Activated B cell treated with CpG ODN at 0.5 μM for 24 hours (primary cell): ENCODE measurements at regions of chr14 and their contacts with region 1.

Region 1: DNA sequence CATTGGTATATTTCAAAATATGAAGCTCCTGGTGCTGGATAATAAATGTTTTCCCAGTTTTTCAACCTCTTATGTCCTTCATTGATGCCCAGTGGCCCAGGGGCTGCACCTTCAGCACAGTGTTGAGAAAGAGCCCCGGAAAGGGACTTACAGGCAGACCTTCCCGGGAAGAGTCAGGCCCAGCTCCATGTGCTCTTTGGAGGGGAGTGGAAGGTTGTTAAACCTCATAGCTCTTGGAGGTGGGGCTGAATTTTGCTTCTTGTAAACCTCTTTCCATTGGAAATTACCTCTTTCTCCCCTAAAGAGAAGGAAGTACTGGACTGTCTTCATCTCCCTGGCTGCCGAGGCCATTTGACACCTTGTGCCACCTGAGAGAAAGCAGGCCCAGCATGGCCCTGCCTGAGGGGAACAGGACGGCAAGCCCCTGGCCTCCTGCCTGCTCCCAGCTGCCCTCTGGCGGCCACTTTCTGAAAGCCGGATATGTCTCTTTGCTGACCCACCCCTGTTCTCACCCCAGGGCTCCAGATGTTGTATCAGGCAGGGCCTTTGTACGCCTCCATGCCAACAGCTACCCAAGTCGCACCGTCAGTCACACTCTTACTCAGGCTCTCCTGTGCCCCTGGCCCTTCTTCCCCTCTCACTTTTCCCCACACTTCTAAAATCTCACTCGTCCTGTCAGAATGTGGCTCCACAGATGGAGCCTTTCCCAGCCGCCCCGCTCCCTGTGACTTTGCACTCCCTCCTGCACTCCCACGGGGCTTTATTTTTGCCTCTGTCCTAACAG is 43.0 kb downstream of the EVL start:
- DNase-seq: peak; percentile 80
- ATAC-seq: peak; percentile 98
- H3K4me3 Mint-ChIP-seq: no peak overlapping the region
- H3K27ac Mint-ChIP-seq: peak overlapping the region; percentile 86
- H3K4me1 Mint-ChIP-seq: peaks cover 49% of the 10 kb centered on the region
- H3K27me3 Mint-ChIP-seq: no peaks in the 10 kb centered on the region
- CTCF ChIP-seq: peak; percentile 17

Region 2: GRCh38 chr14:99982537-99983250 is 125.5 kb before region 1 on chr14:
- CTCF ChIA-PET with region 1: interaction called, 49 read pairs
- POLR2A ChIA-PET with region 1: no interaction called
- intact Hi-C with region 1: loop called (anchors 1 kb)
- DNase-seq: no peak
- ATAC-seq: peak; percentile 98
- H3K4me3 Mint-ChIP-seq: no peak overlapping the region
- H3K27ac Mint-ChIP-seq: no peak overlapping the region
- H3K4me1 Mint-ChIP-seq: no peaks in the 10 kb centered on the region
- H3K27me3 Mint-ChIP-seq: no peaks in the 10 kb centered on the region
- CTCF ChIP-seq: peak; percentile 88

Region 3: GRCh38 chr14:100035700-100036099 is 72.5 kb before region 1 on chr14:
- CTCF ChIA-PET with region 1: interaction called, 10 read pairs
- POLR2A ChIA-PET with region 1: no interaction called
- intact Hi-C with region 1: no loop called
- DNase-seq: no peak
- ATAC-seq: no peak
- H3K4me3 Mint-ChIP-seq: no peak overlapping the region
- H3K27ac Mint-ChIP-seq: no peak overlapping the region
- H3K4me1 Mint-ChIP-seq: no peaks in the 10 kb centered on the region
- H3K27me3 Mint-ChIP-seq: no peaks in the 10 kb centered on the region
- CTCF ChIP-seq: no peak

Region 4: GRCh38 chr14:100067971-100068959 is 40.0 kb before region 1 on chr14:
- CTCF ChIA-PET with region 1: interaction called, 111 read pairs
- POLR2A ChIA-PET with region 1: interaction called, 13 read pairs
- intact Hi-C with region 1: loop called (anchors 1 kb)
- DNase-seq: peak; percentile 60
- ATAC-seq: peak; percentile 47
- H3K4me3 Mint-ChIP-seq: peak overlapping the region; percentile 94
- H3K27ac Mint-ChIP-seq: peak overlapping the region; percentile 98
- H3K4me1 Mint-ChIP-seq: peaks cover 95% of the 10 kb centered on the region
- H3K27me3 Mint-ChIP-seq: no peaks in the 10 kb centered on the region
- CTCF ChIP-seq: no peak

Region 5: DNA sequence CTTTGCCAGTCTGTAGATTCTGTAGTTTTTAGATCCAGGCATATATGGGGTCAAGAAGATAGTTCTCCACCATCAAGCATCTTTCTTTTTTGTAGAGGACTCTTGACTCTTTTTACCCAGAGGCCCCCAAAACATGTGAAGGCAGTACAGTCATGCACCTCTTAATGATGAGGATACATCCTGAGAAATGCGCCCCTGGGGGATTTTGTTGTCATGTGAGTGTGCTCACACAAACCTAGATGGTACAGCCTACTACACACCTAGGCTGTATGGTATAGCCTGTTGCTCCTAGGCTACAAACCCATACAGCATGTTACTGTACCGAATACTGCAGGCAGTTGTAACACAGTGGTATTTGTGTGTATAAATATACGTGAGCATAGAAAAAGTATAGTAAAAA is 20.0 kb before region 1 on chr14:
- CTCF ChIA-PET with region 1: interaction called, 6 read pairs
- POLR2A ChIA-PET with region 1: no interaction called
- intact Hi-C with region 1: loop called (anchors 2 kb)
- DNase-seq: no peak
- ATAC-seq: no peak
- H3K4me3 Mint-ChIP-seq: no peak overlapping the region
- H3K27ac Mint-ChIP-seq: peak overlapping the region; percentile 18
- H3K4me1 Mint-ChIP-seq: peaks cover 8% of the 10 kb centered on the region
- H3K27me3 Mint-ChIP-seq: no peaks in the 10 kb centered on the region
- CTCF ChIP-seq: no peak

Region 6: DNA sequence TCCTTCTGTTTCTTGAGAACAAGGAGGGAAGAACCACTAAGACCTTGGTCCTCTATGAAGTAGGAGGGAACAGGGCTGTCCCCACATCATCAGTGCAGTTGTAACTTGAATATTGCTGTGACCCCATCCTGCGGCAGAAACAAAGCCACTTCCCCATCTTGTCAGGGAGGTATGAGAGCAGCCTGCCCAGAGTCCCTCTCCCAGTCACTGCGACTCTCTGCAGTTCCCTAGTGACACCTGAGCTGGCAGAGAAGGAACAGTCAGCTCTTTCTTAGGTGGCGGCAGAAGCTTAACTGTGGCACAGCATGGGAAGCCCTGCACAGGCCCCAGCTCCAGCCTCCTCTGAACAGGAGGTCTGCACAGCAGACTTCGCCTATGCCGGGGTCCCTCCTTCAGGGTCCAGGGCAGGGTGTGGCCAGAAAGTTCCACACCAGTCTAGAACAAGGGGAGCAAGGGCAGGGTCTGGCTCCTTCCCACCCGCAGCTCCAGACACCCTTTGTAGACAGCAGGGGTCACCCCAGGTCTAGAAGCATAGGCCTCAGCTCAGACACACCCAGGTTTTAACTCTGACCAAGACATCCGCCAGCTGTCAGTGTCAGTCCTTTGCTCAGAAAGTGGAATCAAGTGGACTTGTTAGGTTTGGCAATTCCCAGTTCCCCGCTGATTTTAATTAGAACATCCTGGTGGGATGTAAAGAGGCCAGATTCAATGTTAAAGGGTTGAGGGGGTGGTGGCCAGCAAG is 14.4 kb after region 1 on chr14:
- CTCF ChIA-PET with region 1: interaction called, 11 read pairs
- POLR2A ChIA-PET with region 1: interaction called, 3 read pairs
- intact Hi-C with region 1: no loop called
- DNase-seq: no peak
- ATAC-seq: no peak
- H3K4me3 Mint-ChIP-seq: no peak overlapping the region
- H3K27ac Mint-ChIP-seq: no peak overlapping the region
- H3K4me1 Mint-ChIP-seq: peaks cover 15% of the 10 kb centered on the region
- H3K27me3 Mint-ChIP-seq: no peaks in the 10 kb centered on the region
- CTCF ChIP-seq: no peak

Region 7: DNA sequence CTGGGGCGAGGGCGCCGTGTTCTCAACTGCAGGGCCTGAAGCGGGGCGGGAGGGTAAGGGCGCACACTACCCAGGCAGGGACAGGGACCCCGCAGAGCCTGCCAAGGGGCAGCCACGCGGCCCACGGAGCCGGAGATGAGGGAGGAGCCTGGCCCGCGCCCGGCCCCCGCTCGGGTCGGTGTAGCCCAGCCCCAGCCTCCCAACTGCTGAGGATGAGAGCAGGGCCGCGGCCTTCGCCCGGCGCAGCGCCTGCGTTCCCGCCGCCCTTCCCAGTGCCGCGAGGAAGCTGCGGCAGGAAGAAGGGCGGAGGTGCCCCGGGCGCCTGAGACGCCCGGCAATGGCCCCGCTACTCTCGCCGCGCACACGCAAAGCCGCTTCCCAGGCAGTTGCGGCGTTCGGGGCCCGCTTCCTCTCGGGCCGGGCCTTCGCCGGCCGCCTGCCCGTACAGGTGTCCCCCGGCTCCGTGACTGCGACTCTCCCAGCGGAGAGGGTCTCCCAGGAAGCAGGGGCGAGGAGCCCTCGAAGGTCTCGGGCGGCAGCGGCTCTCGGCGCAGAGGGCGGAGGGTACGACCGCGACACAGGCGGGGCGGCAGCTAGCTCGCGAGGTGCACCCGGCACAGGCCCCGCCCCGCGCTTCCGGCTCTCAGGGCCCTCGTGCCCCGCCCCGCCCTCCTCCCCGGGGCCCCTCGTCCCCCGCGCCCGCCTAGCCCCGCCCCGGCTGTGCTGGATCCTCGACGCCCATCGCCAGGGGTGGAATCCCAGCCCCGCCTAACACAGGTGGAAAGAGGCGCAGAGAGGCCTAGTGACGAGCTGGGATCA is 105.9 kb after region 1 on chr14:
- CTCF ChIA-PET with region 1: no interaction called
- POLR2A ChIA-PET with region 1: no interaction called
- intact Hi-C with region 1: no loop called
- DNase-seq: peak; percentile 91
- ATAC-seq: peak; percentile 96
- H3K4me3 Mint-ChIP-seq: peak overlapping the region; percentile 85
- H3K27ac Mint-ChIP-seq: peak overlapping the region; percentile 80
- H3K4me1 Mint-ChIP-seq: peaks cover 17% of the 10 kb centered on the region
- H3K27me3 Mint-ChIP-seq: no peaks in the 10 kb centered on the region
- CTCF ChIP-seq: no peak

Region 8: DNA sequence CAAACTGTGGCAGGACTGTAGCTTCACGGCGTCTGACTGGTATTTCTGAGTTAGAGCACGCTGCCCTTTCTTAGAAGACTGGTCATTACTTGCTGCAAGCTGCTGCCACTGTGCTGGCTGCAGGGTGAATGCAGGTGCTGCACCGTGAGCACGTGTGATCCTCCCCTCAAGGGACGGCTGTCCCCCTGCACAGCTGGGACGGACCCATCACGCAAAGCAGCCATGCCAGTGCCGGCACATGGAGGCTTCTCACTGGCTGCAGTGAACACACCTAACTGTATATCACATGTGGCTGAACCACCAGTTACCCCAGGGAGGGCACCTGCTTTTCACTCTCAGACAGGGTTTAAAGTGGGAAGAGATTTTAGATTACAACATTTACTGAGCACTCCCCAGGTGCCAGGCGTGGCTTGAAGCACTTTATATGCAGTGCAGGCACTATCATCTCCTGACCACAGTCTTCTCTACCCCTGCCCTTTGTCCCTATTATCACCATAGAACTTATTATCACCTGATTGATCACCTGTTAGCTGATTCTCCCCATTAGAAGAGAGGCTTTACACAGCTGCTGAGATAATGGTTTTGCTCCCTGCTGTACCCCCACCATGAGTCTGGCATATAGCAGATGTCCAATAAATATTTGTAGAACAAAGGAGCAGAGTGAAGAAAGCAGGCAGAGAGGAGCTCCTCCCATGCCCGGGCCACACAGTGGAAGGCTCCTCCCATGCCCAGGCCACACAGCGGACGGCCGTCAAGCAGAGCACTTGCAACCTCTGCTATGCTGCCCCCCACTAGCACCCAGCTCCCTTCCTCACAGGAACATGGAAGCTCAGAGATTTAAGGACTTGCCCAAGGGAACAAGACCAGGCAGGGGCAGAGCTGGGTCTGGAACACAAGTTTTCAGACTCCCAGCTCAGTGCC is 240.8 kb after region 1 on chr14:
- CTCF ChIA-PET with region 1: no interaction called
- POLR2A ChIA-PET with region 1: no interaction called
- intact Hi-C with region 1: no loop called
- DNase-seq: no peak
- ATAC-seq: no peak
- H3K4me3 Mint-ChIP-seq: no peak overlapping the region
- H3K27ac Mint-ChIP-seq: no peak overlapping the region
- H3K4me1 Mint-ChIP-seq: peaks cover 6% of the 10 kb centered on the region
- H3K27me3 Mint-ChIP-seq: no peaks in the 10 kb centered on the region
- CTCF ChIP-seq: no peak